CD14-positive monocyte (primary cell): ENCODE measurements at regions of chr1 and their contacts with region 1.

Region 1: DNA sequence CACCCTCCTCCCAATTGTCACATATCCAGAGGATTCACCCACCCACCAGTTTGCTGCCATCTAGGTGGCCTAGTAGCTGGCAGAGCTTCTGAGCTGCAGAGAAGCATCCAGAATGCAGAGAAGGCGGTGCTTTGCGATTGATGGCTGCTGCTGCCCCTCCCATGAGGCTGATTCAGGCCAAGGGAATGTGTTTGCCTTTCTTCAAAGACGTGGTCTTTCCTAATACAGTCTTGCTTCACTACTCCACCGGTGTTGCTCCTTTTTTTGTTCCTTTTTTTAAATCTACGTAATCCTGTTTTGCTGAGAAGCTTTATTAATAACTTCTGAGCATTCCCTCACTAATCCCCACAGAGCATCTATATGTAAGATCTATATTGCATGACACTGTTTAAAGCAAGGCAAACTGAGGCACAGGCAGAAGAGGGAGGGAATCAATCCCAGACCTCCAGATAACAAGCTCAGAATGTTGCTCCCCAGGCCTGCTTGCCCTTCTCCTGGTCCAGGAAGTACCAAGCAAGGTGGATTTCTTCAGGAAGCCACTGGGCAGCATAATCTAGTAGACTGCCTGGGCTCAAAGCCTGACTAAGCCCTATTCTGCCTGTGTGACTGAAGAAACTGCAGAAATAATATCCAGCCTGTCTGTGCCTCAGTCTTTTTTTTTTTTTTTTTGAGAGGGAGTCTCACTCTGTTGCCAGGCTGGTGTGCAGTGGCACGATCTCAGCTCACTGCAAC is 275.4 kb upstream of the FMN2 start:
- DNase-seq: peak; percentile 77 to 82 (median 80)
- H3K4me3 ChIP-seq: peak overlapping the region in 1 of 3 experiments; percentile 48
- H3K4me3 Mint-ChIP-seq: peak overlapping the region in 1 of 2 donors; percentile 83
- H3K27ac ChIP-seq: peak overlapping the region; percentile 68 to 86
- H3K27ac Mint-ChIP-seq: peak overlapping the region; percentile 88 to 93 (median 92)
- H3K4me1 ChIP-seq: peaks cover 26 to 28% of the 10 kb centered on the region in 2 donors
- H3K4me1 Mint-ChIP-seq: peaks cover 40% of the 10 kb centered on the region
- H3K27me3 ChIP-seq: no peaks in the 10 kb centered on the region
- H3K27me3 Mint-ChIP-seq: peaks cover 1 to 9% (median 2%) of the 10 kb centered on the region in 3 donors
- CTCF ChIP-seq: no peak

Region 2: DNA sequence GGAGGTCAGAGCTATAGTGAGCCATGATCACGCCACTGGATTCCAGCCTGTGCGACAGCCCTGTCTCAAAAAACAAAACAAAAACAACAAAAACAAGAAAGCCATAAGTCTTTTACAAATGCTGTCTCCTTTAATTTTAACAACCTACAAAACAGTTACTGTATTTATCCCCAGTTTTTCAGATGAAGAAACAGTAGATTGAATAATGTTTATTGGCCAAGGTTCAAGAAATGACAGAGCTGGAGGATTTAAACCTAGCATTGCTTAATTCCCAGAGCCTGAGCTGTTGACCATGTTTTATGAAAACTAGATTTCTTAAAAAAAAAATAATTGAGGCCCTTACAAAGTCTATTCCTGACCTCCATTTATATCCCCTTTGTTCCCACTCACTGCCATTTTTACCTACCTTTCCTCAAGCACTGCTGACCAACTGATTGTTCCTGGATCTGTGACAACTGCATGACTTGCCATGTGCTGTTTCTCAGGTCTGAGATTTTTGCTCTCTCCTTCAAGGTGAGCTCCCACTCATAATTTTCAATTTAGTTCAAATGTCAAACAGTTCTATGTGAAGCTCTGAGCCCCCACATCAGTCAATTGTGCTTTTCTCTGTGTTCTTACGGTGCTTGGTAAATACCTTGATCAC is 289.1 kb before region 1 on chr1:
- intact Hi-C with region 1: no loop called
- DNase-seq: no peak
- H3K4me3 ChIP-seq: no peak overlapping the region
- H3K4me3 Mint-ChIP-seq: no peak overlapping the region
- H3K27ac ChIP-seq: no peak overlapping the region
- H3K27ac Mint-ChIP-seq: no peak overlapping the region
- H3K4me1 ChIP-seq: no peaks in the 10 kb centered on the region
- H3K4me1 Mint-ChIP-seq: no peaks in the 10 kb centered on the region
- H3K27me3 ChIP-seq: no peaks in the 10 kb centered on the region
- H3K27me3 Mint-ChIP-seq: peaks cover 0 to 4% (median 0%) of the 10 kb centered on the region in 3 donors
- CTCF ChIP-seq: no peak

Region 3: DNA sequence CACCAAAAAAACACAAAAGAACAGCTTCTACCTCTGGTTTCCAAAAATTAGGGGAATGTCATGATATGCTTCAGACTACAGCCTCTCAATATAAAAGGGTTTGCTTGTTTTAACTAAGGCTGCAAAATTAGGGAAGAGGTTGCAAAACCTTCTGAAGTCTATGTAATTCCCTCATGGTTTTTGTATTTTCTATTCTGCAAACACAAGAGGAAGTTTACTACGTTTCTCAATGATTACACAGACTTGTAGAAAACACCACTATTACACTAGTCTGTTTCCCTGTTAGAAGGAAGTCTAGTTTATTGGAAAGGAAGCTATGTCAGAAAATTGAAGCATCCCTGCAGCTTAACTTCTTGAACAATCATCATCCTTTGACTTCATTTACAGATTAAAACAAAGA is 45.7 kb after region 1 on chr1:
- intact Hi-C with region 1: loop called in 1 of 2 experiments (anchors 5 kb)
- DNase-seq: peak; percentile 65 to 89 (median 82)
- H3K4me3 ChIP-seq: peak overlapping the region in 1 of 3 experiments; percentile 34
- H3K4me3 Mint-ChIP-seq: peak overlapping the region in 1 of 2 donors; percentile 51
- H3K27ac ChIP-seq: peak overlapping the region in 1 of 2 donors; percentile 85
- H3K27ac Mint-ChIP-seq: peak overlapping the region; percentile 70 to 93 (median 87)
- H3K4me1 ChIP-seq: peaks cover 44 to 50% of the 10 kb centered on the region in 2 donors
- H3K4me1 Mint-ChIP-seq: peaks cover 45% of the 10 kb centered on the region
- H3K27me3 ChIP-seq: no peaks in the 10 kb centered on the region
- H3K27me3 Mint-ChIP-seq: no peaks in the 10 kb centered on the region
- CTCF ChIP-seq: no peak